ENCODE measurements at regions of chrX and their contacts with region 1.

Region 1: GRCh38 chrX:101407748-101408531 is at the starts of genes GLA and HNRNPH2:
- DNase-seq: peak; percentile 89
- H3K4me3 Mint-ChIP-seq: peak within 1 kb of the TSS; percentile 83
- H3K27ac Mint-ChIP-seq: peak within 1 kb of the TSS; percentile 95
- H3K4me1 Mint-ChIP-seq: peaks cover 28% of the 10 kb centered on the region
- H3K27me3 Mint-ChIP-seq: no peaks in the 10 kb centered on the region
- total RNA-seq, gene GLA: 28.9 to 29.5 TPM
- total RNA-seq, gene HNRNPH2: 41.7 to 46.9 TPM

Region 2: GRCh38 chrX:101390664-101391525 is 17.0 kb before region 1 on chrX and contains the start of gene RPL36A:
- CTCF ChIA-PET with region 1: interaction called, 16 read pairs
- POLR2A ChIA-PET with region 1: interaction called, 10 read pairs
- DNase-seq: peak; percentile 82
- H3K4me3 Mint-ChIP-seq: peak within 1 kb of the TSS; percentile 96
- H3K27ac Mint-ChIP-seq: peak within 1 kb of the TSS; percentile 88
- H3K4me1 Mint-ChIP-seq: peaks cover 25% of the 10 kb centered on the region
- H3K27me3 Mint-ChIP-seq: no peaks in the 10 kb centered on the region
- total RNA-seq, gene RPL36A: 255 to 425 TPM

Measured in activated CD4-positive, alpha-beta T cell treated with anti-CD3 and anti-CD28 coated beads, Interleukin-2, amount 10 ng/mL, durations not matched to agents 7 days and 5 days (primary cell).